Mammary epithelial cell (primary cell): ENCODE measurements at regions of chr6 and their contacts with region 1.

Region 1: GRCh38 chr6:139764498-139764986 is 390.1 kb upstream of the CITED2 start:
- DNase-seq: peak; percentile 86
- H3K4me3 ChIP-seq: no peak overlapping the region
- H3K27ac ChIP-seq: peak overlapping the region; percentile 64
- H3K4me1 ChIP-seq: peaks cover 24% of the 10 kb centered on the region
- H3K27me3 ChIP-seq: no peaks in the 10 kb centered on the region
- CTCF ChIP-seq: no peak

Region 2: DNA sequence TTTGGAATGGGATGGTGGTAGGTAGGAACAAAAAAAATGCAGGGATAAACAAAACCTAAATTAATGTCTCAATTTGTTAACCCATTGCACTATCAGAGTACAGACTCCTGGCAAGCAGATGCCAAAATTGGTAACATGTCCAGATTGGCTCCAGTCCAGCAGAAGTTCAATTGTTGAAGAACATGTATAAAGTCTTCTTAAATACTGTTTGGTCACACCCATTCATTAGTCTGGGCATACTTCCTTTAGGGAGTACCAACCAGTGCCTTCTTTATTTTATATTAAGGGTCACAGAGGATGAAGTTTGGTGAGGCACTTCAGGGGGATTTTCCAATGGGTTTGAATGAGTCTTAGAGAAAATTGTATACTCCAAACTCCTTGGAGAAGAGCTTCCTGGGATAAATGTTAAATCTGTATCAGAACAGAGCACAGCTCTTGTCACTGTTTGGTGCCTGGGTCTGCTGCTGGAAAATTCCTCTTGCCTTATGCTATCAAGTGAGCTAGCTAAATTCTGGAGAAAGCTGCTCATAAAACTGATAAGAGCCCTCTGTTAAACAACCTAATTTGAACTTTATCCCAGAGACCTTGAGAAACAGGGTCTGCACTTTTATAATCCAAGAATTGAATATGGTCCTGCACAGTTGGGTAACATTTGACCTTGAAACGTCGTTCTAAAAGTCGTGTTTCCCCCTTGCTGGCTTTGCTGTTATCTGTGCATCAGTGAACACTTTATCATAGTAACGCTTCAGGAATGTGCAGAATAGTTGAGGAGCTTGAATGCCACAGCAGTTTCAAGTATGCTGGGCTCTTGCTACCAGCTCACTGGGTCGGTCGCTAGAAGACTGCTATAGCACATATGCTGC is 56.0 kb before region 1 on chr6:
- CTCF ChIA-PET with region 1: no interaction called
- dilution Hi-C with region 1: loop called (anchors 5 kb)
- in situ Hi-C with region 1: no loop called
- intact Hi-C with region 1: no loop called
- DNase-seq: peak; percentile 36
- H3K4me3 ChIP-seq: no peak overlapping the region
- H3K27ac ChIP-seq: no peak overlapping the region
- H3K4me1 ChIP-seq: peaks cover 24% of the 10 kb centered on the region
- H3K27me3 ChIP-seq: no peaks in the 10 kb centered on the region
- CTCF ChIP-seq: no peak

Region 3: DNA sequence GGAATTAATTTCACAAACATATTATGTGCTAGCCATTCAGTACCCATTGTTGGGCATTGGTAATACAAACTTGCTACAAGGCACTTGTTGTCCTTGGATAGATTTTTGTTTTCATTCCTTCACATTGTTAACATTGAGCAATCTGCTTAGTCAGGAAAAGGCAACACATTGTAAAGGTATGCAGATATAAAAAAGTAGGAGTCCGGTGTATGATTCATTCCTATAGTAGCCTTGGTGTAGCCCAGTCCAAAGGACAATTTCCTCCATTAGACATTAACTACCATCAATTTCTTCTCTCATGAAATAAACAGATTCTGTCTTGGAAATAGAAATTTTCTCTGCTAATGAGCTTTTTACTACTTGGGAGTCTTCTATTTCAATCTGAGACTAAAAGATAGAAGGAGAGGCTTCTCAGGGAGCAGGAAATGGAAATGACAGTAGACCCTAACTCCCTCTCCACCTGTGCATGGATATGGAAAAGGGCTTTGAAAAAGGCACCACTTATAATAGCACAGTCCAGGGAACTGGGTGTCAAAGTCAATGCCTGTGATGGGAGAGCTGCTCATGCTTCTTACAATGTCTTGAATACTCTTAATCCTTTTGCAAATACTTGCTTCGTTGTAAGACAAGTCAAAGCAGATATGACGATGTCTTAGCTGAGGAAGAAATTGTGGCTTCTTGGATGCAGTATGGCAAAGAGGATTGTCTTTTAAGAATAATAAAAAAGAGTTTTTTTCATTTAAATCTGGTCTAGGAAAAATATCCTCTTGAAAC is 20.7 kb before region 1 on chr6:
- CTCF ChIA-PET with region 1: no interaction called
- dilution Hi-C with region 1: no loop called
- in situ Hi-C with region 1: no loop called
- intact Hi-C with region 1: loop called (anchors 1 kb)
- DNase-seq: peak; percentile 88
- H3K4me3 ChIP-seq: no peak overlapping the region
- H3K27ac ChIP-seq: no peak overlapping the region
- H3K4me1 ChIP-seq: peaks cover 13% of the 10 kb centered on the region
- H3K27me3 ChIP-seq: no peaks in the 10 kb centered on the region
- CTCF ChIP-seq: no peak